ENCODE measurements at regions of chr6 and their contacts with region 1.

Region 1: DNA sequence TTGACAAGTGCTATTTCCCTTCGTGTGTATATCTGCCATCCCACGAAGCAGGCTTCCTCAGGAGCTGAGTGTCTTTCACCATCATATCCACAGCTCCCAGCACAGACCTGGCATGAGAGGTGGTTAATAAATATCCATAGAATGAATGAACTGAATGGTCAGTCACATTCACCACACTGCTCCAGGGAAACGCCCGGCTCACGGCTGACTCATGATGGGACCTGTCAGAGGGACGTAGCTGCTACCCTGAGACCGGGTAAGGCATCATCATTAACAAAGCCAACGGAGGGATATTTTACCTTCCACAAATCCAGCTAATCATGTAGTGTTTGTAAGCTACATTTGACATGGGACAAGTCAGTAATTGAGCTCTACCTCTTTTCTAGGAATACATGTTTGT is 12.5 kb downstream of the AGPAT4 start:
- DNase-seq: no peak
- H3K4me3 ChIP-seq: no peak overlapping the region
- CTCF ChIP-seq: no peak

Region 2: GRCh38 chr6:161011492-161012480 is 249.5 kb before region 1 on chr6:
- CTCF ChIA-PET with region 1: no interaction called
- POLR2A ChIA-PET with region 1: no interaction called
- DNase-seq: no peak
- H3K4me3 ChIP-seq: no peak overlapping the region
- CTCF ChIP-seq: no peak

Region 3: GRCh38 chr6:161273752-161274487 is 12.6 kb after region 1 on chr6 and contains the start of gene AGPAT4:
- CTCF ChIA-PET with region 1: interaction called, 9 read pairs
- POLR2A ChIA-PET with region 1: interaction called, 13 read pairs
- DNase-seq: peak; percentile 89
- H3K4me3 ChIP-seq: peak within 1 kb of the TSS; percentile 88
- CTCF ChIP-seq: no peak

Region 4: DNA sequence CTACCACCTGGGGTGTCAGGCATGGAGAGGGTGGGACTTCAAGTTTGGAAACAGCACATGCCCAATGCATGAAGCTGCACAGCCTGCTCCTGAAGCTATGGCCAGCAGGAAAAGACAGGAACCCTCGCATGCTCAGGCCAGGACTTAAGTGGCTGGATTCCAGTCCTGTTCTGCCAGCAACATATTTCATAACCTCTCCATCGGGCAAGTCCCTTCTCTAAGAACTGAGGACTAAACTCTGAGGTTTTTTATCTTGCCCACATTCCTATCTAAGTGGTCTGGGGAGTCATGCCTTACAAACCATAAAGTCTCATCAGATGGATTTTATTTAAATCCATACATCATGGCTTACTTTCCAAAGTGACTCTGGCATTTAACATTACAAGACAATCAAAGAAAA is 40.0 kb after region 1 on chr6:
- CTCF ChIA-PET with region 1: no interaction called
- POLR2A ChIA-PET with region 1: no interaction called
- DNase-seq: peak; percentile 77
- H3K4me3 ChIP-seq: no peak overlapping the region
- CTCF ChIP-seq: no peak